Activated CD4-positive, alpha-beta T cell treated with anti-CD3 and anti-CD28 coated beads for 36 hours (primary cell): ENCODE measurements at regions of chr11 and their contacts with region 1.

Region 1: DNA sequence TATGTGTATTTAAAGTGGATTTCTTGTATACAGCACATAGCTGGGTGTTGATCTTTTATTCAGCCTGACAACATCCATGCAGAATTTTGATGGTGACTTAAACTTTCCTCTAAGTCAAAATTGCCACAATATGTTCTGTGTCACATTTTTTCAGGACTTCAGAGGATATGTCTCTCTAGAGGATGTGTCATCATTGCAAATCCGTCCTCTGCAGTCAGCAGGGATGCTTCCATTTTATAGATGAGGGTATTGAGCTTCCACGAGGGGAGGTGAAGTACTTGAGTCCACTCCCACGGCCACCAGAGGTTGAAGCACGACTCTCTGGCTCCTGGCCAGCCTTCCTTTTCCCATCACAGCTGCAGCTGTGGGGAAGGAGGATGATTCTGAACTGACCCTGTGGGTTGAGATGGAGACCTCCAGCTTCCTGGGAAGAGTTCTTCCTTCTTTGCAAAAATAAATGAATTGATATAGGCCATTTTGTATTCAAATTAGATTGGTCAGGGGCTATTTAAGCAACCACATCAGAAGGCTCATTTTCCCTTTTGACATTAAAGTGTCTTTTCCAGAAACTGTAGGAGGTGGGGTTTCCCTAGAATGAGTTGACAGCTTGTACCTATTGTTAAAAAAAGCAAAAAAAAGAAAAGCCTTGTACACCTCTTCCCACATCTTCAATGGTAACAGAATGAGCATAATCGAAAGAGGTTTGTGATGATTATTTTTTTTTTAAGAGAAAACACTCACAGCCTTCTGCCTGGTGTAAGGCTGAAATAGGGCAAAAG is 55.2 kb upstream of the MYEOV start:
- DNase-seq: peak; percentile 32
- ATAC-seq: peak; percentile 82
- H3K4me3 Mint-ChIP-seq: peak overlapping the region; percentile 12
- H3K27ac Mint-ChIP-seq: peak overlapping the region; percentile 68
- H3K4me1 Mint-ChIP-seq: peaks cover 40% of the 10 kb centered on the region
- H3K27me3 Mint-ChIP-seq: peaks cover 3% of the 10 kb centered on the region

Region 2: GRCh38 chr11:68763926-68764639 is 474.7 kb before region 1 on chr11:
- CTCF ChIA-PET with region 1: no interaction called
- POLR2A ChIA-PET with region 1: no interaction called
- intact Hi-C with region 1: no loop called
- DNase-seq: no peak
- ATAC-seq: no peak
- H3K4me3 Mint-ChIP-seq: no peak overlapping the region
- H3K27ac Mint-ChIP-seq: no peak overlapping the region
- H3K4me1 Mint-ChIP-seq: no peaks in the 10 kb centered on the region
- H3K27me3 Mint-ChIP-seq: no peaks in the 10 kb centered on the region

Region 3: GRCh38 chr11:69101115-69101791 is 137.5 kb before region 1 on chr11:
- CTCF ChIA-PET with region 1: no interaction called
- POLR2A ChIA-PET with region 1: no interaction called
- intact Hi-C with region 1: loop called in 1 of 2 experiments (anchors 2 kb)
- DNase-seq: peak; percentile 85
- ATAC-seq: peak; percentile 93
- H3K4me3 Mint-ChIP-seq: no peak overlapping the region
- H3K27ac Mint-ChIP-seq: no peak overlapping the region
- H3K4me1 Mint-ChIP-seq: peaks cover 2% of the 10 kb centered on the region
- H3K27me3 Mint-ChIP-seq: no peaks in the 10 kb centered on the region

Region 4: DNA sequence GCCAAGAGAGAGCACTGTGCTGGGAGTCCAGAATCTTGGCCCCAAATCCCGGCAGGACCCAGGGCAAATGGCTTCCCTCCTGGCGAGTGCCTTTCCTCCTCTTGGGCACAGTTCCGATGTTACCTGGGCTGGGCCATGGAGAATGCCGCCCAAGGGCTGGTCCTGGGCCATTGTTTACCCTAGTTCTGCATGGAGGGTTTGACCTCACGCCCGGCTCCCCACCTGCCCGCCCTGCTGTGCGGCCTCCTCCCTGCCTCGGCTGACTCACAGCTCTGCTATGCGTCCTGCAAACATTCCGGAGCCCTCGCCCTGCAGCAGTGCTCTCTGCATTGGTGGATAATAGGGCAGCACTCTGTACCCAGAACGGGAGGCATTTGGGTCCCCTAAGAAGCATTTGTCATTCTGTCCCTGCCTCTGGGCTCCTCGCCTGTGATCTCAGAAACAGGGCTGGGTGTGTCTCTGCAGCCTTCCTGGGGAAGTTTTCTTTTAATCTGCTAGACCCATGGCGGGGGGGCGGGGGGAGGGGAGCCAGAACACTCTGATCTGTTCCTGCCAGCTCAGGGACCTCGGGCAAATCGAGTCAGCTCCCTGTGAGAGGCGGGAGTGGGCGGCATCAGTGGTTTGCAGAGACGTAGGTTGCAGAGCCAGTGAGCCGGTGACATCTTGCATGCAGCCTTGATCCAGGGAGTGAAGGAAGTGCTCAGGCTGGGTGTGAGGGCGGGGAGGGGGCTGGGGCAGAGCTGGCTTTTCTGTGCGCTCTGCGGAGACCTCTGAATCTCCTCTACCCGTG is 115.9 kb before region 1 on chr11:
- CTCF ChIA-PET with region 1: no interaction called
- POLR2A ChIA-PET with region 1: no interaction called
- intact Hi-C with region 1: loop called (anchors 1 to 5 kb)
- DNase-seq: peak; percentile 91
- ATAC-seq: peak; percentile 91
- H3K4me3 Mint-ChIP-seq: peak overlapping the region; percentile 12
- H3K27ac Mint-ChIP-seq: peak overlapping the region; percentile 19
- H3K4me1 Mint-ChIP-seq: peaks cover 41% of the 10 kb centered on the region
- H3K27me3 Mint-ChIP-seq: no peaks in the 10 kb centered on the region

Region 5: GRCh38 chr11:69144316-69145061 is 94.3 kb before region 1 on chr11:
- CTCF ChIA-PET with region 1: no interaction called
- POLR2A ChIA-PET with region 1: no interaction called
- intact Hi-C with region 1: loop called in 1 of 2 experiments (anchors 1 kb)
- DNase-seq: peak; percentile 73
- ATAC-seq: peak; percentile 92
- H3K4me3 Mint-ChIP-seq: no peak overlapping the region
- H3K27ac Mint-ChIP-seq: peak overlapping the region; percentile 69
- H3K4me1 Mint-ChIP-seq: peaks cover 17% of the 10 kb centered on the region
- H3K27me3 Mint-ChIP-seq: peaks cover 2% of the 10 kb centered on the region

Region 6: DNA sequence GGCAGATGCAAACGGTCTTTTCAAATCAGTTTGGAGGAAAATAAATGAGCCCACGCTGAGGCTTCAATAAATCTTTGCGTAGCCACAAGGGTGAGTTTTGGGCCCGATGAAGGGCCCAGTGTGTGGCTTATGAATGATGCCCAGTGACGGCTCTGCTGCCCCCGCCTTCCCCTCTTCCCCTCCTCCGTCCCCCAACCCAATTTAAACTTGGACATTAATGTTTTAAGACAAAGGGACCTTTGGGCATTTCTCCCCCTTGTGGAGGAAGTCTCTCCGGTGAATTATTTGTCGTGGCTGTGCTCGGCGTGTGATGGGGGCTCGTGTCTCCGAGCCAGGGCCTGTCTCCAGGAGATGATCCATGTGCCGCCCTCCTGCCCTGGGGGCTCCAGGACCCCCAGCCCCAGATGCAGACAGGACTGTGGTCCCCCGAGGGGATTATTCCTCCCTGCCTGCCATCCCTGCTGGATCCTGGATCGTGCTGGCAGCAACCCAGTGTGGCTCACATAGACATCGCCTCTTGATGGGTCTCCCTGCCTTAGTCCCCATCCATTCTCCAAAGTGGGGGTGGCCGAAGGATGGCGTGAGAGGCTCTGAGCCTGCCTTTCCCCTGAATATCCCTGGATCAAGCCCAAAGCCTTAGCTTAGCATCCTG is 26.7 kb before region 1 on chr11:
- CTCF ChIA-PET with region 1: no interaction called
- POLR2A ChIA-PET with region 1: interaction called, 3 read pairs
- intact Hi-C with region 1: loop called in 1 of 2 experiments (anchors 2 kb)
- DNase-seq: no peak
- ATAC-seq: no peak
- H3K4me3 Mint-ChIP-seq: no peak overlapping the region
- H3K27ac Mint-ChIP-seq: no peak overlapping the region
- H3K4me1 Mint-ChIP-seq: peaks cover 27% of the 10 kb centered on the region
- H3K27me3 Mint-ChIP-seq: peaks cover 8% of the 10 kb centered on the region

Region 7: DNA sequence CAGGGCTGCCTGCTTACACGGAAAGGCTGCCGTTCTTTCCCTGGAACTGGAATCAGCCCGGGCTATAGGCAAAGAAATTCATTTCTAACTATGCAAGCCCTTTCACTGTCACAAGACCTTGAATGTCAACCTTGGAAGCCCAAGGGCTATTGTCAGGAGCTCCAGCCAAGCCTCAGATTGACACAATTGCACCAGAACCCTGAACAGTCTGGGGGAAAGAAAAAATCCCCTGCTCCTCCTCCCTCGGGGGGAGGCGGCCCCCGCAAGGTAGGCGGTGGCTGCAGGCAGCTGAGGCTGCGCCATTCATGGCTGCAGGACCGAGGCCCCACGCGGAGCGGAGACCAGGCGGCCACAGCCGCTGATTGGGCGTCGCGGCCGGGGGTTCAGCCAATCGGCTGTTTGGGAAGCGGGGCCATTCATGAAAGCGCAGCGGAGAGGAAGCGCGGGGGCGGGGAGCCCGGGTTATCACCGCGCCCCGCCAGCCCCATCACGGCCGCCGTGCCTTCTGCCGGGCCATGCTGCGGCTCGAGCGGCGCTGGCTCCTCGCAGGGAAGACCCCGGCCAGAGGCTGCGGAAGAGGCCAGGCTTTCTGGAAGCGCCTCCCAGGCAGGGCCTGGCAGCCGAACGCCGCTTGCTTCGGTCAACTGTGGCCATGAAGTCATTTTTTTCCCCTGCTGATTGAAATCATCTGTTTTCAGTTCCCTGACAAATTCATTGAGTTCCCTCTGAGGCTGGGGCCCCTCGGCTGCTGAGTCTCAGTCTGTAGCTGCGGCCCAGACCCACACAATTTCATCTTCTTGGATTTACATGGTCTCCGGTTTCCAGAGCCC is 204.6 kb after region 1 on chr11:
- CTCF ChIA-PET with region 1: no interaction called
- POLR2A ChIA-PET with region 1: no interaction called
- intact Hi-C with region 1: loop called in 1 of 2 experiments (anchors 1 kb)
- DNase-seq: peak; percentile 88
- ATAC-seq: peak; percentile 89
- H3K4me3 Mint-ChIP-seq: peak overlapping the region; percentile 48
- H3K27ac Mint-ChIP-seq: peak overlapping the region; percentile 14
- H3K4me1 Mint-ChIP-seq: peaks cover 16% of the 10 kb centered on the region
- H3K27me3 Mint-ChIP-seq: peaks cover 13% of the 10 kb centered on the region

Region 8: GRCh38 chr11:69546735-69547370 is 308.1 kb after region 1 on chr11:
- CTCF ChIA-PET with region 1: no interaction called
- POLR2A ChIA-PET with region 1: no interaction called
- intact Hi-C with region 1: loop called (anchors 1 to 5 kb)
- DNase-seq: peak; percentile 84
- ATAC-seq: peak; percentile 90
- H3K4me3 Mint-ChIP-seq: no peak overlapping the region
- H3K27ac Mint-ChIP-seq: peak overlapping the region; percentile 40
- H3K4me1 Mint-ChIP-seq: peaks cover 27% of the 10 kb centered on the region
- H3K27me3 Mint-ChIP-seq: peaks cover 45% of the 10 kb centered on the region

Region 9: GRCh38 chr11:70233034-70233995 is 994.6 kb after region 1 on chr11:
- CTCF ChIA-PET with region 1: no interaction called
- POLR2A ChIA-PET with region 1: no interaction called
- intact Hi-C with region 1: no loop called
- DNase-seq: no peak
- ATAC-seq: peak; percentile 63
- H3K4me3 Mint-ChIP-seq: no peak overlapping the region
- H3K27ac Mint-ChIP-seq: no peak overlapping the region
- H3K4me1 Mint-ChIP-seq: no peaks in the 10 kb centered on the region
- H3K27me3 Mint-ChIP-seq: no peaks in the 10 kb centered on the region